Adrenal gland (tissue), 19 donors: ENCODE measurements at regions of chr13 and their contacts with region 1.

Region 1: GRCh38 chr13:19633479-19634255 is at the start of gene MPHOSPH8:
- DNase-seq: peak; percentile 95 to 98 (median 96)
- H3K4me3 ChIP-seq: peak within 1 kb of the TSS; percentile 65 to 99 (median 95)
- H3K27ac ChIP-seq: peak within 1 kb of the TSS; percentile 94 to 99 (median 96)
- H3K4me1 ChIP-seq: peaks cover 23 to 29% of the 10 kb centered on the region in 2 donors
- H3K27me3 ChIP-seq: no peaks in the 10 kb centered on the region
- CTCF ChIP-seq: peak in 1 of 6 experiments; percentile 1
- POLR2A ChIP-seq: peak; percentile 53 to 89
- total RNA-seq, gene MPHOSPH8: 14.7 to 50.8 (median 30.1) TPM

Region 2: DNA sequence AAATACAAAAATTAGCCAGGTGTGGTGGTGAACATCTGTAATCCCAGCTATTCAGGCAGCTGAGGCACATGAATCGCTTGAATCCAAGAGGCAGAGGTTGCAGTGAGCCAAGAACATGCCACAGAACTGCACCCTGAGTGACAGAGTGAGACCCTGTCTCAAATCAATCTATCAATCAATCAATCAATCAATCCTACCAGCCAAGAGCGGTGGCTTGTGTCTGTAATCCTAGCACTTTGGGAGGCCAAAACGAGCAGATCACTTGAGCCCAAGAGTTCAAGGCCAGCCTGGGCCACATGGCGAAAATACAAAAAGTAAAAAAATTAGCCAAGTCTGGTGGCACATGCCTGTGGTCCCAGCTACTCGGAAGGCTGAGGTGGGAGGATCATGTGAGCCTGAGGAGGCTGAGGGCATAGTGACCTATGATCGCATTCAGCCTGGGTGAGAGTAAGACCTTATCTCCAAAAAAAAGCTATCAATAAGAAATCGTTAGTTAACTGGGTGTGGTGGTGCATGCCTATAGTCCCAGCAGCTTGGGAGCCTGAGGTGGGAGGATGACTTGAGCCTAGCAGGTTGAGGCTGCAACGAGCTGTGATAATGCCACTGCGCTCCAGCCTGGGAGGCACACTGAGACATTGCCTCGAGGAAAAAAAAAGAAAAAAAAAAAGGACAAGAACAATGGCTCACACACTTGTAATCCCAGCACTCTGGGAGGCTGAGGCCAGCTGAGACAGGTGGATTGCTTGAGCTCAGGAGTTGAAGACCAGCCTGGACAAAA is 132.7 kb after region 1 on chr13:
- intact Hi-C with region 1: loop called in 1 of 2 experiments (anchors 10 kb)
- DNase-seq: peak in 1 of 7 donors; percentile 43
- H3K4me3 ChIP-seq: no peak overlapping the region
- H3K27ac ChIP-seq: no peak overlapping the region
- H3K4me1 ChIP-seq: peaks cover 7 to 32% of the 10 kb centered on the region in 2 donors
- H3K27me3 ChIP-seq: no peaks in the 10 kb centered on the region
- CTCF ChIP-seq: no peak
- POLR2A ChIP-seq: no peak